Gastrocnemius medialis (tissue), 4 donors: ENCODE measurements at regions of chr5 and their contacts with region 1.

Region 1: GRCh38 chr5:138575194-138576015 is at the start of gene HSPA9:
- DNase-seq: peak; percentile 98 to 99
- ATAC-seq: peak; percentile 95 to 96
- H3K4me3 ChIP-seq: peak within 1 kb of the TSS; percentile 79 to 97 (median 91)
- H3K27ac ChIP-seq: peak within 1 kb of the TSS; percentile 97 to 99 (median 98)
- H3K4me1 ChIP-seq: peaks cover 12 to 22% of the 10 kb centered on the region in 2 donors
- H3K27me3 ChIP-seq: no peaks in the 10 kb centered on the region
- CTCF ChIP-seq: peak in 3 of 5 experiments; percentile 27 to 61 (median 42)
- POLR2A ChIP-seq: peak; percentile 95 to 98
- total RNA-seq, gene HSPA9: 449 to 840 (median 569) TPM

Region 2: DNA sequence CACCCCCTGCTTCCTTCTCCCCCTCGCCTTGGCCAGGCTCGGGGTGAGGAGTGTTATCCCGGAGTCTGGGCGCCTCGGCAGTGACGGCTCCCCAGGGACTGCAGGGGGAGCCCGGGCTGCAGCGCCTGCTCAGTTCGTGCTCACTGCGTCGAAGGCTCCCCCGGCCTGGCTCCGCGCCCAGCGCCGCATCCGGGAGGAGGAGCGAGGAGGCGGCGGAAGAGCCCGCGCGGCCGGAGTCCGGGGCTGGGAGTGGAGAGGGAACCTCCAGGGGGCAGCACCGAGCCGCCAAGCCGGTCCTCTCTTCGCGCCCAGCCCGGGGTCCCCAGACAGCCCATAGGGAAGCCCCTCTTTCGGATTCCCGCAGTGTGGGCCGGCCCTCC is 111.4 kb before region 1 on chr5:
- in situ Hi-C with region 1: no loop called
- intact Hi-C with region 1: loop called (anchors 1 kb)
- DNase-seq: peak; percentile 80 to 91
- ATAC-seq: peak; percentile 53 to 58
- H3K4me3 ChIP-seq: peak overlapping the region; percentile 78 to 98 (median 90)
- H3K27ac ChIP-seq: peak overlapping the region; percentile 94 to 99 (median 96)
- H3K4me1 ChIP-seq: peaks cover 14 to 22% of the 10 kb centered on the region in 2 donors
- H3K27me3 ChIP-seq: peaks cover 0 to 6% (median 0%) of the 10 kb centered on the region in 3 donors
- CTCF ChIP-seq: peak; percentile 95 to 99 (median 96)
- POLR2A ChIP-seq: peak in 1 of 2 donors; percentile 26

Region 3: DNA sequence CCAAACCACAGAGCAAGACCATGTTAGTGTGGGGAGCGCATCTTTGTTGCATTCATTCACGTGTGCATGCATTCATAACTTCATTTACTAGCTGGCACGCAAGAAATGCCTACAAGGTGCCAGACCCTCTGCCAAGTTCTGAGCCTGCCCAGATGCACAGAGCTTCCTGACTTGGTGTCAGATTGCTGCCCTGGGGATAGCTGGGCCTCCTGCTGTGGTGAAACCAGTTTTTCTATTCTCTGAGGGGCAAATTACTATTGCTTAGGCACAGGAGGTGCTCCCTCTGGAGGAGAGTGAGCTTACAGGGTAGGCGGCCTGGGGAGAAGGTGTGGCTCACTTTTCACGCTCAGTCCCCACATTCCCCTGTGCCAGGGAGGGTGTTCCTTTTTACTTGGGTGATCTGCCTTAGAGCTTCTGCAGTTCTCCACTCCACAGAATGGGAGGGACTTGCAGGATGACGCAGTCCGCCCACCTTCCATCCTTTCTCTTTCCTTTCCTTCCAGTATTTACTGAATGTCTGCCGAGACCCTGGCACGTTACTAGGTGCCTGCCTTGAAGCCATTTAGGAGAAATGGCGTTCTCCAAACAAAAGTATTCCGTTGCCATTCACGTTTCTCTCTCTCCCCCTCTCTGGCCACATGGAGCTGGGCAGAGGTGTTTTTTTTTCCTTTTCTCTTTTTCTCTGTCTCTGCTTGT is 149.9 kb after region 1 on chr5:
- in situ Hi-C with region 1: no loop called
- intact Hi-C with region 1: loop called (anchors 1 kb)
- DNase-seq: peak; percentile 19 to 66
- ATAC-seq: peak; percentile 69 to 84
- H3K4me3 ChIP-seq: no peak overlapping the region
- H3K27ac ChIP-seq: peak overlapping the region; percentile 14 to 65 (median 38)
- H3K4me1 ChIP-seq: peaks cover 24 to 37% of the 10 kb centered on the region in 2 donors
- H3K27me3 ChIP-seq: no peaks in the 10 kb centered on the region
- CTCF ChIP-seq: peak in 1 of 5 experiments; percentile 33
- POLR2A ChIP-seq: no peak

Region 4: DNA sequence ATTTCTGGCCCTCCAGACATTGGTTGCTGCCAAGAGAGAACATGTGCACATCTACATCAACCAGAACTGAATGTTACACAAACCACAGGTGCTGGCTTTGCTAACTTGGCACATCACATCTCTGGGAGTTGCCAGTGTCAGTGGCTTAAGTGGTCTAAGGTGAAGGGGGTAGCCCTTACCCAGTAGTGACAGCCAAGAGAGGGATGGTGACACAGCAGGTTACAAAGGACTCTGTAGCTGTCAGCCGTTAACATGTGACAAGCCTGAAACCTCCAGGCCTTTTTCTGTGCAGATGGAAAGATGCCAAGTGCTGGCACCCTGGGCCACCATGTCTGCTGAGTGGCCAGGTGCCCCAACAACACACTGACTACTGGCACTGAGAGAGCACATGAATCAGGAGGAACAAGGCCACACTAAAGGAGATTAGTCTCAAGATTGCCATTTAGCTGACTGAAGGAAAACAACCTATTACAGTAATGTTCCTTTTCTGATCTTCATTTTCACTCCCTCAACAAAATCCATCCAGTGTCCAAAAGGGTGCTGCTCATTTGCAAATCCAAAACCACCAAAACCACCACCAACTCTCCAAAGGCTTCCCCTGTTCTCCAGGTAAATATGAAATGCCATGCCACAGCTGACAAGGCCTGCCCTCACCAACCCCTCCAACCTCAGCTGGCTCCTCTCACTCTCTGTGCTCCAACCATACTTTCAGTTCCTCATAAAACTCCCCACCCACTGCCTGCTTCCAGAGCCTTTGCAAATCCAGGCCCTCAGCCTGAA is 602.6 kb after region 1 on chr5:
- in situ Hi-C with region 1: no loop called
- intact Hi-C with region 1: loop called (anchors 1 kb)
- DNase-seq: peak; percentile 92 to 98
- ATAC-seq: peak; percentile 89
- H3K4me3 ChIP-seq: no peak overlapping the region
- H3K27ac ChIP-seq: peak overlapping the region; percentile 91 to 96 (median 93)
- H3K4me1 ChIP-seq: peaks cover 56 to 57% of the 10 kb centered on the region in 2 donors
- H3K27me3 ChIP-seq: no peaks in the 10 kb centered on the region
- CTCF ChIP-seq: no peak
- POLR2A ChIP-seq: peak in 1 of 2 donors; percentile 23

Region 5: DNA sequence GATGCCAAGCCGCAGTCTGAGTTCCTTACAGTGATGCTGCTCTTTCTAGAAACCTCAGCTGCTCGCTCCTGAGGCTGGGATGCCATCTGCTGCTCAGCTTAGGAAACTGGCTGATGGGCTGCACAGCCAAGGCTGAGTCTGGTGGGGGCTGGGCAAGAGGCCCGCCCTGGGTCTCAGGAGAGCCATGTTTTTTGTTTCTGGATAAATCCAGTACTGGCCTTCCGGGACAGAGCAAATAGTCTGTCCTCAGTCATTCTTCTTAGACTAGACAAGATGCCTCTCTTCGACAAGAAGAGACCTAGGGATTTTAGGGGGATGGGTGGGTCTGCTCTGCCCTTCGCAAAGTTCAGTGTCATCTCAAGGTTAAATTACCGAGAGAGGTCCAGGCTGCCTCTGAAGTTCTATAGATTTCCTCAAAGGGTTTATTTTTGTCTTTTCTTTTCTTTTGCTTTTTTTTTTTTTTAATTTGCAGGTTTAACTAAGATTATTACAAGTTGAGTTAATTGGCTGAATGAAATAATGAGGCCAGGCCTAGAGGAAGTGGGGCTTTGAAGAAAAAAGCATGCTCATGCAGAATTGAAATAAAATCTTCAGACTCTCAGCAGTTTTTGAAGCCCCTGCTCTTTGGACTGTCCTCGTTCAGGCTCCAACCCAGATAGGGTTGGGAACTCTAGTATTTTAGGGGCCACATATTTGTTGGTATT is 687.5 kb after region 1 on chr5:
- in situ Hi-C with region 1: loop called (anchors 5 to 25 kb)
- intact Hi-C with region 1: loop called (anchors 1 kb)
- DNase-seq: peak; percentile 80 to 83
- ATAC-seq: peak; percentile 94 to 99
- H3K4me3 ChIP-seq: no peak overlapping the region
- H3K27ac ChIP-seq: peak overlapping the region in 3 of 4 donors; percentile 32 to 50 (median 42)
- H3K4me1 ChIP-seq: peaks cover 9 to 15% of the 10 kb centered on the region in 2 donors
- H3K27me3 ChIP-seq: no peaks in the 10 kb centered on the region
- CTCF ChIP-seq: peak; percentile 73 to 97 (median 88)
- POLR2A ChIP-seq: no peak

Region 6: DNA sequence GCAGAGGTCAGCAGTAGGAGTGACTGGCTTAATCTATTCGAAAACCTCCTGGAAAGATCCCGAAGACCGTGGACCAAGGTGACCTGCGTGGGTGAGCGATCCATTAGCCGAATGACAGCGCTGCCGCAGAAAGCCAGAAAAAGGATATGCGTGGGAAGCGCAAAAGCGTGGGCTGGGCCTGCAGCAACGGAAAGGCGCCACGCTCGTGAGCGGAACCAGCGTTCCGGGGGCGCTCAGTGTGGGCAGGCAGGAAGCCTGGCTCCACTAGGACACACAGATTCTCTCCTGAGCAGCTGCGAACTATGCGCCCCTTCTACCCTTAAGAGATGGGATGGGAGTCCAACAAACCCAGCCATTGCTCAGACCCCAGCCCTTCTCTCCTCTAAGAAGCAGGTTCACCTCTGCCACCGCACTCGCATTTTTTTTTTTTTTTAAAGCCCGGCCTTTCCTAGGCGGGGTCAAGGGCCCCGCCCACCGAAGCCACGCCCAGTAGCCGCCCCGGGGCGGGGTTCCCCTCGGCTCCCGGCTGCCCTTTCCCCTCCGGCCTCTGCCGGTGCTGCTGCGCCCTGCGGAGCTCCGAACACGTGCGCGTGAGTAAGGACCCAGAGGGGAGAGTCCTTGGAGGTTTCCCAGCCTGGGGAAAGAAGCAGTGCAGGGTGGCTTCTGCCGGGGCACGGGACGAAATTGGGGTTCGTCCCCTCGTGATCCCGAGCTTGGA is 698.3 kb after region 1 on chr5:
- in situ Hi-C with region 1: loop called (anchors 5 to 25 kb)
- intact Hi-C with region 1: no loop called
- DNase-seq: peak; percentile 86 to 90
- ATAC-seq: peak; percentile 79 to 83
- H3K4me3 ChIP-seq: peak overlapping the region; percentile 71 to 91 (median 76)
- H3K27ac ChIP-seq: peak overlapping the region; percentile 92 to 98 (median 97)
- H3K4me1 ChIP-seq: peaks cover 68 to 70% of the 10 kb centered on the region in 2 donors
- H3K27me3 ChIP-seq: no peaks in the 10 kb centered on the region
- CTCF ChIP-seq: peak in 4 of 5 experiments; percentile 20 to 51 (median 22)
- POLR2A ChIP-seq: peak; percentile 87 to 89